ENCODE measurements at regions of chr1 and their contacts with region 1.

Region 1: GRCh38 chr1:77683160-77684148 is 996 bp upstream of the ZZZ3 start:
- DNase-seq: peak; percentile 93
- H3K4me3 ChIP-seq: peak overlapping the region; percentile 49 to 74 (median 63)
- H3K27ac ChIP-seq: peak overlapping the region; percentile 58
- H3K4me1 ChIP-seq: peaks cover 21% of the 10 kb centered on the region
- H3K27me3 ChIP-seq: no peaks in the 10 kb centered on the region
- CTCF ChIP-seq: peak; percentile 55 to 80

Region 2: DNA sequence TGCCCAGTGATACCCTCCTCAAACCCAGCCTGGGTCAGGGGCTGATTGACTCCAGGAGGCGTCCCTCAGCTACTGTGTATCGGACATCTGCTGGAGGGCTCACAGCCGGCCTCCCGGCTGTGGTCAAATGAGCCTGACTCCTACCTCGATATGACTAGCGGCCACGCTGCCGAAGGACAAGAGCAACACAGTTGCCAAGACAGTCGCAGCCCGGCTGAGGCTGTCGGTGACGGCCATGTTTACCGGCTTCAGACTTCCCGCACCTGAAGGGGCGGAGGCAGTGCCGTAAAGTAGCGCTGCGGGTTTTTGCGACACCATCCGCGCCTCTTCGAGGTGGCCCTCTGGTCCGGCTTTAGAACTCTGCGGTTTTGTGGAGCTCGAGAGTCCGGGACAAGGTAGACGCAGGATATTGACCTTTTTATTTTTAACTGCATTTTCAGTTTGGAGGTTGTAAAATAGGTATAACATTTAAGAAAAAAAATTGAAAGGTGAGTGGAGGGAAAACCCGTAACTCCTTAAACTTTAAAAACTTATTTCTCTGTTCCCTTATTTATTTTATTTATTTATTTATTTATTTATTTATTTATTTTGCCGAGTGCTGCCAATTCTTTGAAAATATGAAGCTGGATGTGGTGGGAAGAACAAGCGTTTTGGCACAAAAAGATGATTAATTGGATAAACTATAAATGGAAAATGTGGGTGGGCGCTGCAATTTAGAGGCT is 464.1 kb before region 1 on chr1 and contains the start of gene PIGK:
- CTCF ChIA-PET with region 1: no interaction called
- dilution Hi-C with region 1: no loop called
- in situ Hi-C with region 1: no loop called
- intact Hi-C with region 1: loop called (anchors 10 kb)
- DNase-seq: peak; percentile 86
- H3K4me3 ChIP-seq: peak within 1 kb of the TSS; percentile 65 to 72 (median 69)
- H3K27ac ChIP-seq: peak within 1 kb of the TSS; percentile 68
- H3K4me1 ChIP-seq: peaks cover 13% of the 10 kb centered on the region
- H3K27me3 ChIP-seq: no peaks in the 10 kb centered on the region
- CTCF ChIP-seq: peak in 1 of 2 donors; percentile 3
- total RNA-seq, gene PIGK: 19.8 to 21.7 TPM

Region 3: DNA sequence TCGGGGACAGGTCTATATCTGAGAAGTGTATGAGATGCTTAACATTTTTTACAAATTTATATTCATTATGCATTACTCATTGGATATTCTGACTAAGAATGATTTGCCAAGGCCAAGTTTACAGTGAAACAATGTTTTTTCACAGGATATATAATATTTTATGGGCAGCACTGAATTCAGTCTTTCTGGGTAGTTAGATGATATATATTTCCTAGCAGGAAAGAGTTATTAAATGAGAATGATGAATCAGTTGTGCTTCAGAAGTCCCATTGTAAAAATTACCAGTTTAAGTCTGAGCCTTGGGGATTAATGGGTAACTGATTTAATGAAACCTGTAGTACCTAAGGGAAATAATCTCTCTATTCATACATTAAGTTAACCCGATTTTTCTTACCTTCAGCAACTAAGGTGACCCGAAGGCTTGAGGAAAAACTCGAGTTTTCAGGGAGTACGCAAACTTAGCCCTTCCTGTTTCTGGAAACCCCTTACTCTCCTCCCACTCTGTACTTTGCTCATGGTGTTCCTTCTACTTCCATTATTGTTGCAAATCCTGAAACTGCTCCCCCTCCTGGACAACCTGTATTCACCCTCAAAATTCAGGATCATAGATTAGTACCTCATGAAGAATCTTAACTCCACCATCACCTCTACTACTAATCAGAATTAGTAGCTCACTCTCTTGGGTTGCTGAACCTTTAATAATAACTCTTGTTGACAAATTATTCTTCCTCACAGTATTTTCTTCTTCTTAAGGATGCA is 266.6 kb before region 1 on chr1:
- CTCF ChIA-PET with region 1: no interaction called
- dilution Hi-C with region 1: no loop called
- in situ Hi-C with region 1: no loop called
- intact Hi-C with region 1: loop called (anchors 10 kb)
- DNase-seq: no peak
- H3K4me3 ChIP-seq: no peak overlapping the region
- H3K27ac ChIP-seq: no peak overlapping the region
- H3K4me1 ChIP-seq: peaks cover 6% of the 10 kb centered on the region
- H3K27me3 ChIP-seq: no peaks in the 10 kb centered on the region
- CTCF ChIP-seq: peak; percentile 57 to 58

Region 4: DNA sequence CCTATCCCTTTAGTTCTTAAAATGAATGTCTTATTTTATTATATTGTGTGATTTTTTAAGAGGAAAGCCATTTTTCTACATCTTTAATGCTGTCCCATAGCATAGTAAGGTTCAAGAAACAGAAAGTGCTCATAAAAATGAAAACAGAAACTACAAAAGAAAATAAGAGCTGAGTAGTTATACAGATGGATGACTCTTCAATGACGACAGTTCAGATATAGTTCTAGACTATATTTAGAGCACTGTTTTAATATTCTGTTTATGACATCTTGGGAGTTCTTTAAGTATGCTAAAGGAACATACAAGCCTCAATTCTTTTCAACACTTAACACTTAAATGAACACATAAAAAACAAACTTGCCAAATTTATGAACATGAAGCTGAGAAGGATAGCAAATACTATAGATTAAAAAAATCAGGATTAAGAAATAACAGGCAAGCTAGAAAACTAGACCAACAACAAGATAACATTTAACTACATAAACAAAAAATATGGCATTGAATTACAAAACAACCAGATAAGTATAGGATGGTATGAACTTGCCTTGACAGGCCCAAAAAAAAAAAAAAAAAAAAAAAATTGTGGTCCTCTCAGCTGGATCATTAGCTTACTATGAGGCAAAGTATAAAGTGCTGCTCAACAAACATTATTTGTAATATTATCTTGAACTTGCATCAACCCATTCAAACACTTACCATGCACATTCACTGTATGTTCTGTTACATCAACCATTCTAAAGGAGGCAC is 88.9 kb before region 1 on chr1:
- CTCF ChIA-PET with region 1: no interaction called
- dilution Hi-C with region 1: no loop called
- in situ Hi-C with region 1: no loop called
- intact Hi-C with region 1: loop called (anchors 2 kb)
- DNase-seq: no peak
- H3K4me3 ChIP-seq: no peak overlapping the region
- H3K27ac ChIP-seq: no peak overlapping the region
- H3K4me1 ChIP-seq: peaks cover 5% of the 10 kb centered on the region
- H3K27me3 ChIP-seq: no peaks in the 10 kb centered on the region
- CTCF ChIP-seq: no peak

Region 5: DNA sequence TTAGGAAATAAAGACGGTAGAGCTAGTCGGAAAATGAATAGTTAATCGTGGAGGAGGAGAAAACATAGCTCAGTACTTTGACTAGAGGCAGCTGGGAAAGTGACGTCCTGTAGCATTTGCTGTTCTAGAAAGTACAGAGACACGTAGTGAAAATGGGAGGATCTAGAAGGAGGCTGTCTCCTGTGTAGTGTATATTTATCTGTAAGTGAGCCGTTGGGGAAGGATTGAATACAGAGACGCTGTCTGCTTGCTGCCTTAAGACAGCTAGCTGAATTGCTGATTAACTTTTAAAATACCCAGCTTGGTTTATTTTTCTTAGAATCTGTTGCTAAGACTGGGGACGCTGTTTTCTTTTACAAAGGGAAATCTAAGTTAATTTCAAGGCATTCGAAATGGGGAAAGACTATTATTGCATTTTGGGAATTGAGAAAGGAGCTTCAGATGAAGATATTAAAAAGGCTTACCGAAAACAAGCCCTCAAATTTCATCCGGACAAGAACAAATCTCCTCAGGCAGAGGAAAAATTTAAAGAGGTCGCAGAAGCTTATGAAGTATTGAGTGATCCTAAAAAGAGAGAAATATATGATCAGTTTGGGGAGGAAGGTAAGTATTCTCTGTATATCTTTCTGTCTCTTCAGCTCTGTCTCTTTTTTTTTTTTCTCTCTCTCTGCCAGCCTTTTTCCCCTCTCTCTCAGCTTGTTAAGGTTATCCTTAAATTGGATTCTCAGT is 321.4 kb after region 1 on chr1 and contains the start of gene DNAJB4:
- CTCF ChIA-PET with region 1: no interaction called
- dilution Hi-C with region 1: no loop called
- in situ Hi-C with region 1: no loop called
- intact Hi-C with region 1: loop called (anchors 1 kb)
- DNase-seq: peak; percentile 96
- H3K4me3 ChIP-seq: peak within 1 kb of the TSS; percentile 57 to 89 (median 70)
- H3K27ac ChIP-seq: peak within 1 kb of the TSS; percentile 100
- H3K4me1 ChIP-seq: peaks cover 14% of the 10 kb centered on the region
- H3K27me3 ChIP-seq: no peaks in the 10 kb centered on the region
- CTCF ChIP-seq: no peak
- total RNA-seq, gene DNAJB4: 15.6 to 25.3 TPM

Measured in mammary epithelial cell (primary cell).